ENCODE measurements at regions of chr10 and their contacts with region 1.

Region 1: DNA sequence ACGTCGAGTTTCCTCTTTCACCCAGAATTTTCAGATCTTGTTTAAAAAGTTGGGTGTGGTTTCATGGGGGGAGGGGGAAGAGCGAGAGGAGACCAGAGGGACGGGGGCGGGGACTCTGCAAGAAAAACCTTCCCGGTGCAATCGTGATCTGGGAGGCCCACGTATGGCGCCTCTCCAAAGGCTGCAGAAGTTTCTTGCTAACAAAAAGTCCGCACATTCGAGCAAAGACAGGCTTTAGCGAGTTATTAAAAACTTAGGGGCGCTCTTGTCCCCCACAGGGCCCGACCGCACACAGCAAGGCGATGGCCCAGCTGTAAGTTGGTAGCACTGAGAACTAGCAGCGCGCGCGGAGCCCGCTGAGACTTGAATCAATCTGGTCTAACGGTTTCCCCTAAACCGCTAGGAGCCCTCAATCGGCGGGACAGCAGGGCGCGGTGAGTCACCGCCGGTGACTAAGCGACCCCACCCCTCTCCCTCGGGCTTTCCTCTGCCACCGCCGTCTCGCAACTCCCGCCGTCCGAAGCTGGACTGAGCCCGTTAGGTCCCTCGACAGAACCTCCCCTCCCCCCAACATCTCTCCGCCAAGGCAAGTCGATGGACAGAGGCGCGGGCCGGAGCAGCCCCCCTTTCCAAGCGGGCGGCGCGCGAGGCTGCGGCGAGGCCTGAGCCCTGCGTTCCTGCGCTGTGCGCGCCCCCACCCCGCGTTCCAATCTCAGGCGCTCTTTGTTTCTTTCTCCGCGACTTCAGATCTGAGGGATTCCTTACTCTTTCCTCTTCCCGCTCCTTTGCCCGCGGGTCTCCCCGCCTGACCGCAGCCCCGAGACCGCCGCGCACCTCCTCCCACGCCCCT is at the start of gene VIM:
- DNase-seq: peak; percentile 72 to 84 (median 81)
- ATAC-seq: peak; percentile 40
- H3K4me3 ChIP-seq: peak within 1 kb of the TSS; percentile 93
- H3K4me3 Mint-ChIP-seq: peak within 1 kb of the TSS; percentile 87 to 100 (median 97)
- H3K27ac ChIP-seq: peak within 1 kb of the TSS; percentile 83
- H3K27ac Mint-ChIP-seq: peak within 1 kb of the TSS; percentile 91 to 100 (median 97)
- H3K4me1 ChIP-seq: peaks cover 34 to 39% of the 10 kb centered on the region in 2 donors
- H3K4me1 Mint-ChIP-seq: peaks cover 25 to 61% (median 55%) of the 10 kb centered on the region in 7 donors
- H3K27me3 ChIP-seq: no peaks in the 10 kb centered on the region
- H3K27me3 Mint-ChIP-seq: peaks cover 0 to 3% (median 0%) of the 10 kb centered on the region in 5 donors
- total RNA-seq, gene VIM: 498 to 2,181 (median 1,002) TPM

Region 2: GRCh38 chr10:16817125-16818019 is 410.9 kb before region 1 on chr10 and contains the start of gene RSU1:
- CTCF ChIA-PET with region 1: interaction called, 3 read pairs
- POLR2A ChIA-PET with region 1: interaction called, 42 read pairs
- intact Hi-C with region 1: loop called (anchors 1 kb)
- DNase-seq: peak; percentile 99 to 100 (median 100)
- ATAC-seq: peak; percentile 99
- H3K4me3 ChIP-seq: peak within 1 kb of the TSS; percentile 66
- H3K4me3 Mint-ChIP-seq: peak within 1 kb of the TSS; percentile 88 to 98 (median 93)
- H3K27ac ChIP-seq: peak within 1 kb of the TSS; percentile 79
- H3K27ac Mint-ChIP-seq: peak within 1 kb of the TSS; percentile 84 to 96 (median 94)
- H3K4me1 ChIP-seq: peaks cover 8 to 28% of the 10 kb centered on the region in 2 donors
- H3K4me1 Mint-ChIP-seq: peaks cover 25 to 50% (median 46%) of the 10 kb centered on the region in 7 donors
- H3K27me3 ChIP-seq: no peaks in the 10 kb centered on the region
- H3K27me3 Mint-ChIP-seq: peaks cover 0 to 15% (median 0%) of the 10 kb centered on the region in 5 donors
- total RNA-seq, gene RSU1: 36.1 to 86.7 (median 48.7) TPM

Region 3: GRCh38 chr10:17001961-17002749 is 226.2 kb before region 1 on chr10:
- CTCF ChIA-PET with region 1: no interaction called
- POLR2A ChIA-PET with region 1: interaction called, 4 read pairs
- intact Hi-C with region 1: loop called (anchors 1 kb)
- DNase-seq: peak in 5 of 9 donors; percentile 25 to 79 (median 38)
- ATAC-seq: peak; percentile 59
- H3K4me3 ChIP-seq: no peak overlapping the region
- H3K4me3 Mint-ChIP-seq: peak overlapping the region in 9 of 10 donors; percentile 30 to 69 (median 63)
- H3K27ac ChIP-seq: peak overlapping the region; percentile 67
- H3K27ac Mint-ChIP-seq: peak overlapping the region; percentile 65 to 98 (median 85)
- H3K4me1 ChIP-seq: peaks cover 20 to 35% of the 10 kb centered on the region in 2 donors
- H3K4me1 Mint-ChIP-seq: peaks cover 21 to 79% (median 57%) of the 10 kb centered on the region in 7 donors
- H3K27me3 ChIP-seq: no peaks in the 10 kb centered on the region
- H3K27me3 Mint-ChIP-seq: peaks cover 0 to 66% (median 0%) of the 10 kb centered on the region in 5 donors

Region 4: DNA sequence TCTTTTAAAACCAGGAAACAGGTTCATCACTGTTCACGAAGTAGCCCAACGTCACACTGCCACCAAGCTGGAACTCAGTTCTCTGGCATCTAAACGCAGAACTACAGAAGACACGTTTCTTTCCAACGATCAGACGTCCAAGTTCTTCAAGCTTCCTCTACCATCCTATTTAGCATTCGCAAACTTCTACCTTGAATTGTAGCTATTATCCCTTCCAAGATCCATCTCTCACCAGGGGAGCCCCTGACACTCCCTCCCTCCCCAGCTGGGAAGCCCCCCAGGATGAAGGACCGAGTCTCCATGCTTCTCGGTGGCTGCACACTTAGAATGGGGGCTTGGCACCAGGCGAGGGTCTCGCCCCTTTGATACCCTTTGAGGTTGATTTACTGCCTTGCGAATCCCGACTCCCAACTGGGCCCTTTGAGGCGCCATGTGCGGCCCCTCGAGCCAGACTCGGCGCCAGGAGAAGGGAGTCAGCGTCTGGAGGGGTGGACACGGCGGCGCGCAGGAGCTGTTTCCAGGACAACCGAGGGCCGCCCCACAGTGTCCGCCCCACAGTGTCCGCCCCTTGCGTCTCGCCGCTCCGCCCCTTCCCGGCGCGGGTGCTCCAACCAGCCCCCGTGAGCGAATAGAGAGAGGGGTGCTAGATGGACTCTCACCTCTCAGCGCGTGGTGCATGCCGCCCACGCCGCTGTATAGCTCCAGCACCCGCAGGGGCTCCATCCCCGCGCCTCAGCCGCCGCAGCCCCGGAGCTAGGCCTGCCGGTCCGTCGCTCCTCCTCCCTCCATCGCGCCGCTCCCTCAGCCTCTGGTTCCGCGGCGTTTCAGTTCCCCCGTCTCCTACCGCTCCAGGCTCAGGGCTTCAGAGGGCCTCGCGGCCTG is 27.2 kb before region 1 on chr10 and contains the start of gene TRDMT1:
- CTCF ChIA-PET with region 1: interaction called, 18 read pairs
- POLR2A ChIA-PET with region 1: interaction called, 167 read pairs
- intact Hi-C with region 1: loop called (anchors 1 kb)
- DNase-seq: peak; percentile 60 to 82 (median 74)
- ATAC-seq: peak; percentile 89
- H3K4me3 ChIP-seq: peak within 1 kb of the TSS; percentile 94
- H3K4me3 Mint-ChIP-seq: peak within 1 kb of the TSS; percentile 86 to 99 (median 94)
- H3K27ac ChIP-seq: peak within 1 kb of the TSS; percentile 90
- H3K27ac Mint-ChIP-seq: peak within 1 kb of the TSS; percentile 90 to 99 (median 96)
- H3K4me1 ChIP-seq: peaks cover 9 to 15% of the 10 kb centered on the region in 2 donors
- H3K4me1 Mint-ChIP-seq: peaks cover 25 to 67% (median 51%) of the 10 kb centered on the region in 7 donors
- H3K27me3 ChIP-seq: no peaks in the 10 kb centered on the region
- H3K27me3 Mint-ChIP-seq: peaks cover 0 to 4% (median 0%) of the 10 kb centered on the region in 5 donors
- total RNA-seq, gene TRDMT1: 10.2 to 30.6 (median 15.9) TPM

Region 5: GRCh38 chr10:17257466-17258321 is 29.4 kb after region 1 on chr10:
- CTCF ChIA-PET with region 1: interaction called, 3 read pairs
- POLR2A ChIA-PET with region 1: interaction called, 3 read pairs
- intact Hi-C with region 1: loop called in 1 of 2 experiments (anchors 1 kb)
- DNase-seq: peak in 8 of 9 donors; percentile 15 to 71 (median 58)
- ATAC-seq: peak; percentile 88
- H3K4me3 ChIP-seq: no peak overlapping the region
- H3K4me3 Mint-ChIP-seq: peak overlapping the region in 3 of 10 donors; percentile 39 to 55 (median 51)
- H3K27ac ChIP-seq: no peak overlapping the region
- H3K27ac Mint-ChIP-seq: peak overlapping the region in 1 of 9 donors; percentile 38
- H3K4me1 ChIP-seq: no peaks in the 10 kb centered on the region
- H3K4me1 Mint-ChIP-seq: peaks cover 5 to 13% (median 6%) of the 10 kb centered on the region in 7 donors
- H3K27me3 ChIP-seq: no peaks in the 10 kb centered on the region
- H3K27me3 Mint-ChIP-seq: no peaks in the 10 kb centered on the region

Region 6: DNA sequence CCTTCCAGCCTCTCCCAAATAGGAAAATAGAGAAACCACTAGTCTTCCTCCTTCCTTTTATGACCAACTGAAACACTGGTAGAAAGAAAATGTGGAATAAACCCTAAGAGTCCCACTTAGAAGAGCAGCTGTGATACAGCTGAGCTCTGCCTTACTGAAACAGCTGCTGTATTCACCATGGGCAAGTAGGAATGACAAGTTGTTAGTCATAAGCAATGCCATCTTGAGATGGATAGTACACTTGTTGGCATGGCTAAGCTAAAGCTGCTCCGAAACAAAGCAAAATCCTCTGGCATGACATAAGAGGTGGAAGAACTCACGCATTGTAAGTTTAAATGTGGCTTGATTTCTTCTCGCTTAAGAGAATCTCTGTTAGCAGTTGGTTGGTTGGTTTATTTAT is 475.4 kb after region 1 on chr10:
- CTCF ChIA-PET with region 1: no interaction called
- POLR2A ChIA-PET with region 1: no interaction called
- intact Hi-C with region 1: no loop called
- DNase-seq: no peak
- ATAC-seq: no peak
- H3K4me3 ChIP-seq: no peak overlapping the region
- H3K4me3 Mint-ChIP-seq: no peak overlapping the region
- H3K27ac ChIP-seq: no peak overlapping the region
- H3K27ac Mint-ChIP-seq: no peak overlapping the region
- H3K4me1 ChIP-seq: no peaks in the 10 kb centered on the region
- H3K4me1 Mint-ChIP-seq: peaks cover 0 to 2% (median 0%) of the 10 kb centered on the region in 7 donors
- H3K27me3 ChIP-seq: no peaks in the 10 kb centered on the region
- H3K27me3 Mint-ChIP-seq: no peaks in the 10 kb centered on the region

Region 7: GRCh38 chr10:18659120-18659818 is 1431.0 kb after region 1 on chr10 and contains the start of gene ARL5B:
- CTCF ChIA-PET with region 1: no interaction called
- POLR2A ChIA-PET with region 1: no interaction called
- intact Hi-C with region 1: loop called (anchors 2 to 10 kb)
- DNase-seq: peak; percentile 82 to 97 (median 93)
- ATAC-seq: peak; percentile 98
- H3K4me3 ChIP-seq: peak within 1 kb of the TSS; percentile 89
- H3K4me3 Mint-ChIP-seq: peak within 1 kb of the TSS; percentile 94 to 100 (median 99)
- H3K27ac ChIP-seq: peak within 1 kb of the TSS; percentile 92
- H3K27ac Mint-ChIP-seq: peak within 1 kb of the TSS; percentile 95 to 99 (median 99)
- H3K4me1 ChIP-seq: peaks cover 16 to 21% of the 10 kb centered on the region in 2 donors
- H3K4me1 Mint-ChIP-seq: peaks cover 28 to 56% (median 44%) of the 10 kb centered on the region in 7 donors
- H3K27me3 ChIP-seq: no peaks in the 10 kb centered on the region
- H3K27me3 Mint-ChIP-seq: no peaks in the 10 kb centered on the region
- total RNA-seq, gene ARL5B: 9.7 to 15.8 (median 13.9) TPM